Naive thymus-derived CD4-positive, alpha-beta T cell (primary cell): ENCODE measurements at regions of chr11 and their contacts with region 1.

Region 1: DNA sequence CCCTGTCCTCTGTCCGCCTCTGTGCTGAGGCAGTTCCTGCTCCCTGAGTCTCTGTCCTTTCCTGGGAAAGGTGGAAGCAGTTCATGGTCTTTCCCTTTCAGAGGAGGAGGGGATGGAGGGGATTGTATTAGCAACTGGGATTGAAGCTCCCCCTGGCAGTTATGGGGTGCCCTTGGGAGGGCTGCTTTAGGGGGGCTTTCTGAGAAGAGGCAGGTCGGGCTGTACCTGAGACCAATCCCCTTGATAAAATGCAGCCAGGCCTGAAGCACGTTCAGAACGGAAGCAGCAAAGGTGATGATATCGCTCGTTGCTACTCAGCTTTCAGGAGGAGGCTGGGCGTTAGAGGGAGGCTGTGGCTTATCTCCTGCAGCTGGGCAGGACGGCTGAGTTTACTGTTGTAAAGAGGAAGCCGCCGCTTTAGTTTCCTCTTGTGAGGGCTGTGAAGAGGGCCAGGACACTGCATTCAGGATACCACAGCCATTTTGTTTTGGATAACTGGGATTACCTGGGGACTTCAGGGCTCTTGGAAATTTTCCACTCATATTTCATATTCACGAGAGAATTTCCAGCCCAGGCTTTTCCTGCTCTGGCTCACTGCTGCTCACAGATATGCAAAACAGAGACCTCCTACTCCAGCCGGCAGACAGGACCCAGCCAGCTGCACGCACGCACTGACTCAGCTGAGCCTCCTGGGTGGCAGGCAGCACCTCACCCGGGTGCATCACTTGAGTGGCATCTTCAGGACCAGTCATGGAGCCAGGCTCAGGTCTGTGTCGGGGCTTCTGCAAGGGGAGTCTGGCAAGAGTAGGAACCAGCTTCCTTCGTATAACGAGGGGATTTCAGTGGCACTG is 798 bp downstream of the AMPD3 start:
- DNase-seq: peak; percentile 45 to 85 (median 77)
- ATAC-seq: peak; percentile 71
- H3K4me3 ChIP-seq: peak overlapping the region; percentile 55
- H3K4me3 Mint-ChIP-seq: peak overlapping the region; percentile 78 to 96 (median 92)
- H3K27ac ChIP-seq: peak overlapping the region; percentile 75
- H3K27ac Mint-ChIP-seq: peak overlapping the region; percentile 87 to 98 (median 94)
- H3K4me1 ChIP-seq: peaks cover 62 to 67% of the 10 kb centered on the region in 2 donors
- H3K4me1 Mint-ChIP-seq: peaks cover 72 to 92% (median 90%) of the 10 kb centered on the region in 7 donors
- H3K27me3 ChIP-seq: no peaks in the 10 kb centered on the region
- H3K27me3 Mint-ChIP-seq: peaks cover 0 to 9% (median 0%) of the 10 kb centered on the region in 5 donors

Region 2: DNA sequence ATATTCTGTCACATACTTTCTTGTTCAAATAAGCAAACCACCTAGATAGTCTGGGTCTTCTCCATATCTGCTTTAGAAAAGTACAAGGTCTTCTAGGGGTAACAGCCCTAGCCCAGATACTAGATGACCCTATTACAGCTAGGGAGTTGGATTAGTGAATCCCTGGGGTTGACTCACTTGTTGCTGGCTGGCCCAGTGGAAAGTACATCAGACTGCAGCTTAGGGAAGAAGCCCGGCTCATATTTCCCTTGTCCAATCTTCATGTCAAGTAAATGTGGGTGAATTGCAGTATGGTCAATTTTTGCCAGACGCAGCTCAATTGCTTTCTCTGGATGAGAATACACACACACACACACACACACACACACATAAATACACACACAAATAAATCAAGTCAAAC is 1285.4 kb before region 1 on chr11:
- CTCF ChIA-PET with region 1: no interaction called
- POLR2A ChIA-PET with region 1: no interaction called
- intact Hi-C with region 1: no loop called
- DNase-seq: no peak
- ATAC-seq: no peak
- H3K4me3 ChIP-seq: no peak overlapping the region
- H3K4me3 Mint-ChIP-seq: no peak overlapping the region
- H3K27ac ChIP-seq: no peak overlapping the region
- H3K27ac Mint-ChIP-seq: peak overlapping the region in 1 of 9 donors; percentile 27
- H3K4me1 ChIP-seq: no peaks in the 10 kb centered on the region
- H3K4me1 Mint-ChIP-seq: peaks cover 0 to 37% (median 14%) of the 10 kb centered on the region in 7 donors
- H3K27me3 ChIP-seq: no peaks in the 10 kb centered on the region
- H3K27me3 Mint-ChIP-seq: no peaks in the 10 kb centered on the region

Region 3: DNA sequence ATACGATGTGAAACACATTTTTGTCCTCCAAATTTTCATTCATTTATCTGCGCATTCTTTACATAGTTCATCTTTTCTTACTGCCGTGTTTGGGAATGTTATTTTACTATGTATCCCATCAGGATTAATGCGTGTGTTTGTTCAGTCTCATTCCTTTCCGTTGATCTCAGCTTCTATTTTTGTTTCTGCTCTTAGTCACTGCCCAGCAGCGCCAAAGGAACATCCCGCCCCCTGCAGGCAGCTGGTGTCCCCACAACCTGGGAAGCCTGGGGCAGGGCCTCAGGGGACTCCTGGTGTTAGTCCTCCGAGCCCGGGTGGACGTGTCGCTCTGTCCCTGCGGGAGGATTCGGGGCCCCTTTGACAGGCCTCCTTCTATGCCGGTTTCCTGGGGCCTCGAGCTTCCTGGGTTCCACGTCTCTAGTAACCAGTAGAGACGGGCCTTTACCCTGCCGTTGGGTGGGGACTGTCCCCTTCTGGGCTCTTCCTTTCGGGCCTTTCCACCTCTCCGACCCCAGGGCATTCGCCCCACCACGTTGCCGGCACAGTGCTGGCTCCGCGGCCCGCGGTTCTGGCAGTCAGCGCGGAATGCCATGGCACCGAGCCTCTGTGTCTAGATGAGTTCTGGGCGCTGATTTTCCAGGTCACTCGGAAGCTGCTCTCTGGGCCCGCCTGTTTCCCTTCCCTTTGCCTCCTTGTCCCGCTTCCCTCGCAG is 842.6 kb before region 1 on chr11:
- CTCF ChIA-PET with region 1: no interaction called
- POLR2A ChIA-PET with region 1: no interaction called
- intact Hi-C with region 1: loop called in 1 of 2 experiments (anchors 5 kb)
- DNase-seq: peak; percentile 63 to 88 (median 76)
- ATAC-seq: peak; percentile 70
- H3K4me3 ChIP-seq: peak overlapping the region; percentile 71
- H3K4me3 Mint-ChIP-seq: peak overlapping the region; percentile 94 to 99 (median 96)
- H3K27ac ChIP-seq: peak overlapping the region; percentile 75
- H3K27ac Mint-ChIP-seq: peak overlapping the region; percentile 82 to 98 (median 92)
- H3K4me1 ChIP-seq: peaks cover 0 to 14% of the 10 kb centered on the region in 2 donors
- H3K4me1 Mint-ChIP-seq: peaks cover 9 to 34% (median 18%) of the 10 kb centered on the region in 7 donors
- H3K27me3 ChIP-seq: no peaks in the 10 kb centered on the region
- H3K27me3 Mint-ChIP-seq: no peaks in the 10 kb centered on the region

Region 4: GRCh38 chr11:10441652-10442503 is 14.0 kb before region 1 on chr11:
- CTCF ChIA-PET with region 1: interaction called, 13 read pairs
- POLR2A ChIA-PET with region 1: interaction called, 22 read pairs
- intact Hi-C with region 1: loop called (anchors 2 kb)
- DNase-seq: peak in 3 of 9 donors; percentile 17 to 36 (median 20)
- ATAC-seq: peak; percentile 67
- H3K4me3 ChIP-seq: no peak overlapping the region
- H3K4me3 Mint-ChIP-seq: peak overlapping the region in 5 of 10 donors; percentile 7 to 44 (median 39)
- H3K27ac ChIP-seq: no peak overlapping the region
- H3K27ac Mint-ChIP-seq: peak overlapping the region in 8 of 9 donors; percentile 26 to 85 (median 54)
- H3K4me1 ChIP-seq: peaks cover 5 to 21% of the 10 kb centered on the region in 2 donors
- H3K4me1 Mint-ChIP-seq: peaks cover 14 to 50% (median 35%) of the 10 kb centered on the region in 7 donors
- H3K27me3 ChIP-seq: no peaks in the 10 kb centered on the region
- H3K27me3 Mint-ChIP-seq: peaks cover 0 to 16% (median 0%) of the 10 kb centered on the region in 5 donors

Region 5: GRCh38 chr11:10540923-10541560 is 85.2 kb after region 1 on chr11 and contains the start of gene RNF141:
- CTCF ChIA-PET with region 1: interaction called, 5 read pairs
- POLR2A ChIA-PET with region 1: interaction called, 15 read pairs
- intact Hi-C with region 1: loop called (anchors 1 kb)
- DNase-seq: peak; percentile 87 to 99 (median 94)
- ATAC-seq: peak; percentile 99
- H3K4me3 ChIP-seq: peak within 1 kb of the TSS; percentile 81
- H3K4me3 Mint-ChIP-seq: peak within 1 kb of the TSS; percentile 86 to 93 (median 90)
- H3K27ac ChIP-seq: peak within 1 kb of the TSS; percentile 90
- H3K27ac Mint-ChIP-seq: peak within 1 kb of the TSS; percentile 68 to 95 (median 86)
- H3K4me1 ChIP-seq: peaks cover 0 to 8% of the 10 kb centered on the region in 2 donors
- H3K4me1 Mint-ChIP-seq: peaks cover 9 to 37% (median 27%) of the 10 kb centered on the region in 7 donors
- H3K27me3 ChIP-seq: no peaks in the 10 kb centered on the region
- H3K27me3 Mint-ChIP-seq: no peaks in the 10 kb centered on the region
- total RNA-seq, gene RNF141: 11.9 to 22.7 (median 17.3) TPM

Region 6: GRCh38 chr11:10857709-10858438 is 402.0 kb after region 1 on chr11 and contains the start of gene ZBED5:
- CTCF ChIA-PET with region 1: no interaction called
- POLR2A ChIA-PET with region 1: interaction called, 8 read pairs
- intact Hi-C with region 1: loop called (anchors 5 kb)
- DNase-seq: peak; percentile 93 to 97 (median 96)
- ATAC-seq: peak; percentile 94
- H3K4me3 ChIP-seq: peak within 1 kb of the TSS; percentile 91
- H3K4me3 Mint-ChIP-seq: peak within 1 kb of the TSS; percentile 94 to 100 (median 99)
- H3K27ac ChIP-seq: peak within 1 kb of the TSS; percentile 91
- H3K27ac Mint-ChIP-seq: peak within 1 kb of the TSS; percentile 98 to 100 (median 100)
- H3K4me1 ChIP-seq: peaks cover 5 to 9% of the 10 kb centered on the region in 2 donors
- H3K4me1 Mint-ChIP-seq: peaks cover 20 to 73% (median 60%) of the 10 kb centered on the region in 7 donors
- H3K27me3 ChIP-seq: no peaks in the 10 kb centered on the region
- H3K27me3 Mint-ChIP-seq: peaks cover 0 to 2% (median 0%) of the 10 kb centered on the region in 5 donors
- total RNA-seq, gene ZBED5: 56.7 to 146 (median 94.0) TPM